Naive thymus-derived CD4-positive, alpha-beta T cell (primary cell): ENCODE measurements at regions of chr10 and their contacts with region 1.

Region 1: DNA sequence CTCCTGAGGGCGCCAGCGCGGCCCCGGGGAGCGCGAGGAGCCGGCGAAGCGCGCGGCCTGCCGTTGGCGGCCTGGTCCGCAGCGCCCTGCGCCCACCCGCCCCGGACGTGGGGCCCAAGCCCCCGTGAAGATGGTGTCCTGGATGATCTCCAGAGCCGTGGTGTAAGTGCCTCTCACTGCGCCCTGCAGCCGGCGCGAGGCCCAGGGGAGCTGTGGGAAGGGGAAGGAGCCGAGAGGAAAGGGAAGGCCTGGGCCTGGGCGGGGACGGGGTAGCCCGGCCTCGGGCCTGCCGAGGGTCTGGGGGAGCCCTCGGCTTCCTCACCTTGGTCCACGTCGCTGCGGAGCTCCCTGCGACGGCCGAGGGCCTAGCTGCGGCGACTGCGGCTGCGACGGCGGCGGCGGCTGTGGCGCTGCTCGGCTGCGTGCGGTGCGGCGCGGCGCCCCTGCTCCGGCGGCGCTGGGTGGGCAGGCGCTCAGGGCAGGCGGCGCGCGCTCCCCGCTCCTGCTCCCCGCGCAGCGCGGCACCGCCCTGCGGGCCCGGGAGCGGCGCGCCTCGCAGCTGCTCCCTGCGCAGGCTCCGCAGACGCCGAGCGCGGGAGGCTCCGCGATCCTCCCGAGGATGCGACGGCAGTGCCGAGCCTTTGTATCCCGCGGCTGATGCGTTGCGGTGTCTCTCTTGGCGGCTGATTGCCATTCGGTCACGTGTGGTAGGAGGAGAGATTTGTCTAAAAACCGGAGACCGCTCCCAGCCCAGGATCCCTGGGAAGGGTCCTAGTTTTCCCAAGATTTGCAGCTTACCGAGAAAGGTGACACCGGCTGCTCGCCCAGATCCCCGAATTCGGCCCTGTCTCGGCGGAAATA is 445 bp downstream of the REEP3 start:
- DNase-seq: peak; percentile 45 to 70 (median 61)
- ATAC-seq: peak; percentile 78
- H3K4me3 ChIP-seq: peak overlapping the region; percentile 83
- H3K4me3 Mint-ChIP-seq: peak overlapping the region; percentile 72 to 92 (median 88)
- H3K27ac ChIP-seq: peak overlapping the region; percentile 86
- H3K27ac Mint-ChIP-seq: peak overlapping the region; percentile 81 to 95 (median 86)
- H3K4me1 ChIP-seq: peaks cover 4 to 30% of the 10 kb centered on the region in 2 donors
- H3K4me1 Mint-ChIP-seq: peaks cover 36 to 80% (median 67%) of the 10 kb centered on the region in 7 donors
- H3K27me3 ChIP-seq: no peaks in the 10 kb centered on the region
- H3K27me3 Mint-ChIP-seq: no peaks in the 10 kb centered on the region

Region 2: GRCh38 chr10:62804356-62805230 is 717.1 kb before region 1 on chr10 and contains the start of gene ADO:
- CTCF ChIA-PET with region 1: no interaction called
- POLR2A ChIA-PET with region 1: no interaction called
- intact Hi-C with region 1: loop called in 1 of 2 experiments (anchors 1 kb)
- DNase-seq: peak; percentile 69 to 86 (median 80)
- ATAC-seq: peak; percentile 93
- H3K4me3 ChIP-seq: peak within 1 kb of the TSS; percentile 66
- H3K4me3 Mint-ChIP-seq: peak within 1 kb of the TSS; percentile 90 to 100 (median 96)
- H3K27ac ChIP-seq: peak within 1 kb of the TSS; percentile 86
- H3K27ac Mint-ChIP-seq: peak within 1 kb of the TSS; percentile 93 to 100 (median 98)
- H3K4me1 ChIP-seq: peaks cover 15 to 19% of the 10 kb centered on the region in 2 donors
- H3K4me1 Mint-ChIP-seq: peaks cover 22 to 47% (median 39%) of the 10 kb centered on the region in 7 donors
- H3K27me3 ChIP-seq: no peaks in the 10 kb centered on the region
- H3K27me3 Mint-ChIP-seq: peaks cover 0 to 20% (median 0%) of the 10 kb centered on the region in 5 donors
- total RNA-seq, gene ADO: 9.8 to 21.3 (median 15.6) TPM

Region 3: GRCh38 chr10:63173468-63174232 is 348.0 kb before region 1 on chr10:
- CTCF ChIA-PET with region 1: no interaction called
- POLR2A ChIA-PET with region 1: no interaction called
- intact Hi-C with region 1: loop called in 1 of 2 experiments (anchors 5 kb)
- DNase-seq: no peak
- ATAC-seq: peak; percentile 72
- H3K4me3 ChIP-seq: no peak overlapping the region
- H3K4me3 Mint-ChIP-seq: peak overlapping the region in 2 of 10 donors; percentile 45 to 56
- H3K27ac ChIP-seq: no peak overlapping the region
- H3K27ac Mint-ChIP-seq: peak overlapping the region; percentile 32 to 88 (median 75)
- H3K4me1 ChIP-seq: no peaks in the 10 kb centered on the region
- H3K4me1 Mint-ChIP-seq: peaks cover 4 to 69% (median 25%) of the 10 kb centered on the region in 7 donors
- H3K27me3 ChIP-seq: no peaks in the 10 kb centered on the region
- H3K27me3 Mint-ChIP-seq: no peaks in the 10 kb centered on the region

Region 4: GRCh38 chr10:63227207-63227915 is 294.3 kb before region 1 on chr10:
- CTCF ChIA-PET with region 1: no interaction called
- POLR2A ChIA-PET with region 1: interaction called, 3 read pairs
- intact Hi-C with region 1: loop called in 1 of 2 experiments (anchors 2 kb)
- DNase-seq: peak in 6 of 9 donors; percentile 35 to 63 (median 56)
- ATAC-seq: peak; percentile 43
- H3K4me3 ChIP-seq: no peak overlapping the region
- H3K4me3 Mint-ChIP-seq: peak overlapping the region; percentile 8 to 69 (median 53)
- H3K27ac ChIP-seq: peak overlapping the region; percentile 80
- H3K27ac Mint-ChIP-seq: peak overlapping the region; percentile 28 to 97 (median 94)
- H3K4me1 ChIP-seq: peaks cover 23 to 42% of the 10 kb centered on the region in 2 donors
- H3K4me1 Mint-ChIP-seq: peaks cover 26 to 86% (median 75%) of the 10 kb centered on the region in 7 donors
- H3K27me3 ChIP-seq: no peaks in the 10 kb centered on the region
- H3K27me3 Mint-ChIP-seq: no peaks in the 10 kb centered on the region

Region 5: GRCh38 chr10:63241841-63242281 is 279.8 kb before region 1 on chr10:
- CTCF ChIA-PET with region 1: no interaction called
- POLR2A ChIA-PET with region 1: no interaction called
- intact Hi-C with region 1: no loop called
- DNase-seq: peak in 5 of 9 donors; percentile 27 to 41 (median 30)
- ATAC-seq: peak; percentile 45
- H3K4me3 ChIP-seq: peak overlapping the region; percentile 20
- H3K4me3 Mint-ChIP-seq: peak overlapping the region; percentile 25 to 84 (median 77)
- H3K27ac ChIP-seq: peak overlapping the region; percentile 46
- H3K27ac Mint-ChIP-seq: peak overlapping the region; percentile 68 to 89 (median 81)
- H3K4me1 ChIP-seq: peaks cover 43 to 44% of the 10 kb centered on the region in 2 donors
- H3K4me1 Mint-ChIP-seq: peaks cover 54 to 95% (median 79%) of the 10 kb centered on the region in 7 donors
- H3K27me3 ChIP-seq: no peaks in the 10 kb centered on the region
- H3K27me3 Mint-ChIP-seq: no peaks in the 10 kb centered on the region

Region 6: GRCh38 chr10:63465293-63466143 is 56.1 kb before region 1 on chr10 and contains the start of gene JMJD1C:
- CTCF ChIA-PET with region 1: no interaction called
- POLR2A ChIA-PET with region 1: interaction called, 3 read pairs
- intact Hi-C with region 1: loop called (anchors 1 to 2 kb)
- DNase-seq: peak; percentile 49 to 72 (median 63)
- ATAC-seq: peak; percentile 85
- H3K4me3 ChIP-seq: peak within 1 kb of the TSS; percentile 89
- H3K4me3 Mint-ChIP-seq: peak within 1 kb of the TSS; percentile 88 to 98 (median 95)
- H3K27ac ChIP-seq: peak within 1 kb of the TSS; percentile 86
- H3K27ac Mint-ChIP-seq: peak within 1 kb of the TSS; percentile 68 to 97 (median 94)
- H3K4me1 ChIP-seq: peaks cover 0 to 16% of the 10 kb centered on the region in 2 donors
- H3K4me1 Mint-ChIP-seq: peaks cover 14 to 68% (median 34%) of the 10 kb centered on the region in 7 donors
- H3K27me3 ChIP-seq: no peaks in the 10 kb centered on the region
- H3K27me3 Mint-ChIP-seq: peaks cover 0 to 31% (median 0%) of the 10 kb centered on the region in 5 donors
- total RNA-seq, gene JMJD1C: 67.6 to 331 (median 137) TPM

Region 7: GRCh38 chr10:63554657-63555056 is 33.0 kb after region 1 on chr10:
- CTCF ChIA-PET with region 1: no interaction called
- POLR2A ChIA-PET with region 1: no interaction called
- intact Hi-C with region 1: loop called in 1 of 2 experiments (anchors 2 kb)
- DNase-seq: peak in 7 of 9 donors; percentile 38 to 63 (median 44)
- ATAC-seq: peak; percentile 94
- H3K4me3 ChIP-seq: no peak overlapping the region
- H3K4me3 Mint-ChIP-seq: peak overlapping the region in 5 of 10 donors; percentile 3 to 62 (median 15)
- H3K27ac ChIP-seq: no peak overlapping the region
- H3K27ac Mint-ChIP-seq: peak overlapping the region; percentile 4 to 86 (median 43)
- H3K4me1 ChIP-seq: peaks cover 0 to 8% of the 10 kb centered on the region in 2 donors
- H3K4me1 Mint-ChIP-seq: peaks cover 9 to 29% (median 26%) of the 10 kb centered on the region in 7 donors
- H3K27me3 ChIP-seq: no peaks in the 10 kb centered on the region
- H3K27me3 Mint-ChIP-seq: no peaks in the 10 kb centered on the region

Region 8: DNA sequence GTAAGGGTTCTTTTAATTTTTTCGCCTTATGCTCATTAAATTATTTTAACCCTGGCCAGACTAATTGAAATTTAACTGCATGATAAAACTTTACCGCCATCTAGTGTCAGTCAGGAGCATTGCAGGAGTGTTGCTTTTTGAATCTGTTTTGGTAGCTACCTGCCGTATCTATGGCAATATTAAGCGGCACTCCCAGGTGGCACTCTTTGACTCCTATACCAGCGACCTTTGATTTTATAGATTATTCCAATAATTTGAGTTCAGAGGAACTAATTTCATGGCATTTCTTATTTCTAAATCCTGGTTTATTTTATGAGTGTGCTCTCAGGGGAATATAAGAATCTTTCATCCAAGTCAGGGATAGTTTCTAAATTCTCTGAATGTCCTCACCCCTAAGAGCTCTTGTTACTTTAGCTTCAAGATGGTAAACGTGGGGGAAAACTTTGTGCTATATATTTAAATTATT is 198.5 kb after region 1 on chr10:
- CTCF ChIA-PET with region 1: interaction called, 3 read pairs
- POLR2A ChIA-PET with region 1: interaction called, 4 read pairs
- intact Hi-C with region 1: loop called (anchors 2 to 5 kb)
- DNase-seq: peak in 8 of 9 donors; percentile 33 to 74 (median 63)
- ATAC-seq: peak; percentile 87
- H3K4me3 ChIP-seq: no peak overlapping the region
- H3K4me3 Mint-ChIP-seq: peak overlapping the region in 3 of 10 donors; percentile 8 to 63 (median 16)
- H3K27ac ChIP-seq: no peak overlapping the region
- H3K27ac Mint-ChIP-seq: peak overlapping the region in 5 of 9 donors; percentile 1 to 71 (median 68)
- H3K4me1 ChIP-seq: no peaks in the 10 kb centered on the region
- H3K4me1 Mint-ChIP-seq: peaks cover 0 to 22% (median 7%) of the 10 kb centered on the region in 7 donors
- H3K27me3 ChIP-seq: no peaks in the 10 kb centered on the region
- H3K27me3 Mint-ChIP-seq: peaks cover 2 to 11% (median 3%) of the 10 kb centered on the region in 5 donors

Region 9: GRCh38 chr10:63935705-63936104 is 414.1 kb after region 1 on chr10:
- CTCF ChIA-PET with region 1: no interaction called
- POLR2A ChIA-PET with region 1: no interaction called
- intact Hi-C with region 1: no loop called
- DNase-seq: no peak
- ATAC-seq: no peak
- H3K4me3 ChIP-seq: no peak overlapping the region
- H3K4me3 Mint-ChIP-seq: no peak overlapping the region
- H3K27ac ChIP-seq: no peak overlapping the region
- H3K27ac Mint-ChIP-seq: no peak overlapping the region
- H3K4me1 ChIP-seq: no peaks in the 10 kb centered on the region
- H3K4me1 Mint-ChIP-seq: no peaks in the 10 kb centered on the region
- H3K27me3 ChIP-seq: no peaks in the 10 kb centered on the region
- H3K27me3 Mint-ChIP-seq: peaks cover 0 to 15% (median 8%) of the 10 kb centered on the region in 5 donors